ENCODE measurements at regions of chr17 and their contacts with region 1.

Region 1: GRCh38 chr17:68497885-68498319 is 14.3 kb upstream of the PRKAR1A start:
- DNase-seq: peak; percentile 78 to 95 (median 94)
- H3K4me3 ChIP-seq: peak overlapping the region in 4 of 7 experiments; percentile 8 to 55 (median 28)
- H3K27ac ChIP-seq: no peak overlapping the region
- H3K4me1 ChIP-seq: peaks cover 7 to 17% (median 14%) of the 10 kb centered on the region in 4 experiments
- H3K27me3 ChIP-seq: no peaks in the 10 kb centered on the region

Region 2: GRCh38 chr17:68463211-68464019 is 34.5 kb before region 1 on chr17:
- CTCF ChIA-PET with region 1: interaction called, 11 read pairs
- POLR2A ChIA-PET with region 1: no interaction called
- DNase-seq: no peak
- H3K4me3 ChIP-seq: no peak overlapping the region
- H3K27ac ChIP-seq: no peak overlapping the region
- H3K4me1 ChIP-seq: peaks cover 17 to 34% (median 28%) of the 10 kb centered on the region in 4 experiments
- H3K27me3 ChIP-seq: no peaks in the 10 kb centered on the region